Calu3 (cell line): ENCODE measurements at regions of chr21 and their contacts with region 1.

Region 1: DNA sequence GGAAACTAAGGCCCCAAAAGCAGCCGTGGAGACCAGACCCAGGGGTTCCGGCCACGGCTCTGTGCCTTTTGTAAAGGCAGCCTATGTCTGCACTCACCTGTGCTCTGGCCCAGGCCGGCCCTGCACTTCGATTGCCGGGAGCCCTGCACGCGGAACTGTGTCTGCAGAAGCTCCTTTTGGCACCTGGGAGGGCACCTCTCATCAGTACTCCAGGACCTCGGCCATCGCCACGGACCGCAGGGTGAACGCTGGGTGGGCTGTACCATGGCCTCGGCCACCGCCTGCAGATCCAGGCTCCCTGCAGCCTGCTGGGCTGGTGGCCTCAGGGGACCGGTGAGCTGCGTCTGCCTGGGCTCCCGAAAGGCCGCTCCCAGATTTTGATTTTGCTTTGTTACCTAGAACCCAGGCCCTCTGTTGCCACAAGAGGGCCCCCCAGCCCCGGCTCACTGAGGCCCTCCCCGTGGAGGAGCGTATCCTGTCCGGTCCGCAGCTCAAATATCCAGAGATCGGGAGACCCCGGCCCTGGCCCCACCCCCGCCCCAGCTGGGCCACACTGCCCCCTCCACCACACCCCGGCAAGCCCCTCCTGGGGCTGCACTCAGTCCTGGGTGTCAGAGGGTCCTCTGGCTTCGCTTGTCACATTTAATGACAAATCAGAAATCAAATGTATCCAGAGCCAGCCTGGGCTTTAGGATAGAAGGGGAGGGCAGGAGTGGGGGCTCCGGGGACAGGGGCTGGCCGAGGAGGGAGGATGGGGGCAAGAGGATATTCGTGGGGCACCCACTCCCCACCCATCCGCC is 60.2 kb upstream of the PDE9A start:
- DNase-seq: peak; percentile 77
- H3K4me3 Mint-ChIP-seq: no peak overlapping the region
- H3K27ac Mint-ChIP-seq: no peak overlapping the region
- H3K4me1 Mint-ChIP-seq: no peaks in the 10 kb centered on the region
- H3K27me3 Mint-ChIP-seq: no peaks in the 10 kb centered on the region
- CTCF ChIP-seq: peak; percentile 63

Region 2: DNA sequence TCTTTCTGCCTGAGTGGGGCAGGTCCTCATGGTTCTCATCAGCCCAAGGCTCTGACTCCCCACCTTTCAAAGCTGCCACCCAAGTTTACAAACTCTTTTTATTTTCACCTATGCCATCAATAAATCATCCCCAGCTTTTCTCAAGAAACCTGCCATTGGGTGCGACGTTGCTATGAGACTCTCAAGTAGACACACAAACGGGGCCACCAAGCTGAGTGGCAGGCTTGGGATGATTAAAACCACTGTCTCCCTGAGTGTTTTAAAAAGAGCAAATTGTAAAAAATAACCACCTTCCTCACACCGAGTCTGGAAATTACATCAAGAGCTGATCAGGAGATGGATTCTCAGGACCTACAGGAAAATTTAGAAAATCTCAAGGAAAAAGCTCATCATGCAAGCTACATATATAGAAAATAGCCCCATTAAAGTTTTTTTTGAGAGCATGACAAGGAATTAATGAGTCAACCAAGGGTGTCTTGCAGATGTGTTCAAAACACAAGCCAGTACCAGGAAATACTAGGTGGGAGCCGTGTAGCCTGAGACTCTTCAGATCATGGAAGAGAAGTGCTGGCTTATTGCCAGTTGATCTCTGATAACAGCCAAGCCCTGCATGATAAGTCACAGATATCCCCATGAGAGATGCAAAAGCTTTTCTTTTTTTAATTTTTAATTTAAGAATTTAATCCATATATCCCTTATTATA is 1583.7 kb before region 1 on chr21:
- CTCF ChIA-PET with region 1: no interaction called
- intact Hi-C with region 1: no loop called
- DNase-seq: no peak
- H3K4me3 Mint-ChIP-seq: no peak overlapping the region
- H3K27ac Mint-ChIP-seq: no peak overlapping the region
- H3K4me1 Mint-ChIP-seq: no peaks in the 10 kb centered on the region
- H3K27me3 Mint-ChIP-seq: no peaks in the 10 kb centered on the region
- CTCF ChIP-seq: no peak

Region 3: DNA sequence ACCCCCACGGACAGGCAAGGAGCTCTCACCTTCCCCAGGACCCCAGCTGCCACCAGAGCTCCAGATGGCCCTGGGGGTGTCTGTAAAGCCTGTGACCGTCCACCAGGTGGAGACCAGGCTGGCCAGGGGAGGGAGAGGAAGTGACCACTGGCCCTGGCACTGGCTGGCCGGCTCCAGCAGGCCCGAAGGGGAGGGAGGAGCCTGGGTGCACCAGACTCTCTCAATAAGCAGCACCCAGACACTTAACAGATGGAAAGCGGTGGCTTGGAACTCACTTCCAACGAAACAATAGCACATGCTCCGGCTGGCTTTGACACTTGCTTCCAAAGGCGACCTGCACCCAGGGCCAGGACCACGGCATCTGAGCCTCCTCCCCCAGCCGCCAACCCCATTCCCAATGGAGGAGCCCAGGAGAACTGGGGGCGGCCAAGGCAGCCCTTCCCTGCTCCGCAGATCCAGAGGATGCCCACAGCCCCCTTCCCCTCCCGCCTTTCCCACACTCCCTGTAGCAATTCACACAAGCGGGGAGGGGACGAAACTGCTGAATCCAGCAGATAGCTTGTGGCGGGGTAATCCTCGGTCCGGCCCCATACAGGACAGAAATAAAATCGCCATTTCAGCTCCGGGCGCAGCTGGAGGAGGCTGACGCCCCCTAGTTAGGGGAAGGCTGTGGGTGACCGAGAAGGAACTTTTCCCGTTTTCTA is 59.5 kb after region 1 on chr21:
- CTCF ChIA-PET with region 1: interaction called, 10 read pairs
- intact Hi-C with region 1: no loop called
- DNase-seq: peak; percentile 74
- H3K4me3 Mint-ChIP-seq: peak overlapping the region; percentile 66
- H3K27ac Mint-ChIP-seq: no peak overlapping the region
- H3K4me1 Mint-ChIP-seq: peaks cover 19% of the 10 kb centered on the region
- H3K27me3 Mint-ChIP-seq: peaks cover 13% of the 10 kb centered on the region
- CTCF ChIP-seq: peak; percentile 46

Region 4: DNA sequence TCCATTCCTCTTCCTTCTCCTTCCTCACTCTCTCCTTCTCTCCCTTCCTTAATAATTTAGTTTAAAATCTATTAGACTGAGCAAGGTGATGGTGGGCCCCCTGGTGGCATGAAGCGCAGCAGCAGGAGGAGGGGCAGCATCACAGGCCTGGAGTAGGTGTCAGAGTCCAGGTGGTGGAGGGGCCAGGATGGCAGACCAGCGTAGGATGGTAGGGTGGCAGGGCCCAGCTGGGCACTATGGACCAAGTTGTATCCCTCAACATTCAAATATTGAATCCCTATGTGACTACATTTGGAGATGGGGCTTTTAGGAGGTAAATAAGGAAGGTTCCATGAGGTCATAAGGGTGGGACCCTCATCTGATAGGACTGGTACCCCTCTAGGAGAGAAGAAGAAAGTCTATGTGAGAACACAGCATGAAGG is 225.1 kb after region 1 on chr21:
- CTCF ChIA-PET with region 1: interaction called, 6 read pairs
- intact Hi-C with region 1: loop called (anchors 5 kb)
- DNase-seq: peak; percentile 55
- H3K4me3 Mint-ChIP-seq: no peak overlapping the region
- H3K27ac Mint-ChIP-seq: no peak overlapping the region
- H3K4me1 Mint-ChIP-seq: peaks cover under 1% of the 10 kb centered on the region
- H3K27me3 Mint-ChIP-seq: no peaks in the 10 kb centered on the region
- CTCF ChIP-seq: peak; percentile 26